CD4-positive, alpha-beta T cell (primary cell): ENCODE measurements at regions of chr21 and their contacts with region 1.

Region 1: DNA sequence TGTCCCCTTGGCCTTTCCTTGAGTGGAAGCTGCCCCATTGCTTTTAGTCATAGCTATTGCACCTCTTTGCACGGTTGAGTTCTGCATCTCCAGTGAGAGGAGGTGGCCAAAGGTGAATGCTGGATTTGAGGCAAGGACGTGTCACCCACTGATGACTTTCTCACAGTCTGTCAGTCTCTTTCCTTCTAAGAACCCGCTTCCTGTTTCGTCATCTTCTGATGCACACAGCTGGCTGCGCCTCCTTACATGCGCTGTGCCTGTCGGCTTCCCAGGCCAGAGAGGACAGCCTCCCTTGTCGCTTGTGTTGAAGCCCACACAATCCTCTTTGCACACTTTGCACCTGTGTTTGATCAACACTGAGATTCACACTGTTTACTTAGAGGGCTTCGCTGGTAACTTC is 41.8 kb upstream of the PWP2 start:
- DNase-seq: peak; percentile 58 to 94 (median 75)
- ATAC-seq: peak; percentile 91
- H3K4me3 ChIP-seq: peak overlapping the region; percentile 20
- H3K4me3 Mint-ChIP-seq: peak overlapping the region; percentile 67
- H3K27ac ChIP-seq: peak overlapping the region; percentile 55 to 91
- H3K27ac Mint-ChIP-seq: peak overlapping the region; percentile 92
- H3K4me1 ChIP-seq: peaks cover 18% of the 10 kb centered on the region
- H3K4me1 Mint-ChIP-seq: peaks cover 60% of the 10 kb centered on the region
- H3K27me3 ChIP-seq: no peaks in the 10 kb centered on the region
- H3K27me3 Mint-ChIP-seq: no peaks in the 10 kb centered on the region
- CTCF ChIP-seq: no peak

Region 2: GRCh38 chr21:42833439-42833815 is 1232.0 kb before region 1 on chr21:
- CTCF ChIA-PET with region 1: no interaction called
- POLR2A ChIA-PET with region 1: no interaction called
- intact Hi-C with region 1: no loop called
- DNase-seq: peak; percentile 38 to 75 (median 57)
- ATAC-seq: peak; percentile 85
- H3K4me3 ChIP-seq: peak overlapping the region; percentile 24
- H3K4me3 Mint-ChIP-seq: peak overlapping the region; percentile 81
- H3K27ac ChIP-seq: no peak overlapping the region
- H3K27ac Mint-ChIP-seq: peak overlapping the region; percentile 40
- H3K4me1 ChIP-seq: peaks cover 35% of the 10 kb centered on the region
- H3K4me1 Mint-ChIP-seq: peaks cover 44% of the 10 kb centered on the region
- H3K27me3 ChIP-seq: no peaks in the 10 kb centered on the region
- H3K27me3 Mint-ChIP-seq: no peaks in the 10 kb centered on the region
- CTCF ChIP-seq: peak; percentile 46

Region 3: DNA sequence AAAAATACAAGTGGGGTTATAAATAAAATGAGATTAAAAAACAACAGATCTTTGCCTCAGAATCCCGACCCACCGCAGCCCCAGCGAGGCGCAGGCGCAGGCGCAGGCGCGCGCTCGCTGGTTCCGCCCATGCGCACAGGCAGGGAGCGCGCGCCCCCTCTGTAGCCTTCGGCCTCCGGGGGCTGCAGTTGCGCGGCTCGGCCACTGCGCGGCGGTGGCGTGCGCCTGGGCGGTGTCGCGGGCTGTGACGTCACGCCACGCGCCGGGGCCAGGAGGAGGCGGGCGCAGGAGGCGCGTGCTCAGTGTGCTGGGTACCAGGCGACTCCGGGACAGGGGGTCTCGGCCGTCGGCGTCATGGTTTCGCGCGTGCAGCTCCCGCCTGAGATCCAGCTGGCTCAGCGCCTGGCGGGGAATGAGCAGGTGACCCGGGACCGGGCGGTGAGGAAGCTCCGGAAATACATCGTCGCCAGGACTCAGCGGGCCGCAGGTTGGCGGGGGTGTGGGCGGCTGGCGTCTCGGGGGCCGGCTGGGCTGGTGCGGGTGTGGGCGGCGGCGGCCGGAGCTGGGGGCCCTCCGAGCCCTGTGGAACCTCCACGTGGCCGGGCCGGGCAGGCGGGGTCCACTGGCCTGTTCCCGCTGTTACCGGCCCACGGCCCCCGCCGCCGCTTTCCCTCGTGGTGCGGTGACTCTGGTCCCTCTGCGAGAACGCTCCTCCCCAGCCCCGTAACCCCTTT is 276.0 kb before region 1 on chr21 and contains the start of gene RRP1:
- CTCF ChIA-PET with region 1: no interaction called
- POLR2A ChIA-PET with region 1: no interaction called
- intact Hi-C with region 1: loop called in 1 of 2 experiments (anchors 10 kb)
- DNase-seq: peak; percentile 85 to 98 (median 94)
- ATAC-seq: peak; percentile 93
- H3K4me3 ChIP-seq: peak within 1 kb of the TSS; percentile 76
- H3K4me3 Mint-ChIP-seq: peak within 1 kb of the TSS; percentile 95
- H3K27ac ChIP-seq: peak within 1 kb of the TSS; percentile 44 to 55
- H3K27ac Mint-ChIP-seq: peak within 1 kb of the TSS; percentile 84
- H3K4me1 ChIP-seq: peaks cover 27% of the 10 kb centered on the region
- H3K4me1 Mint-ChIP-seq: peaks cover 18% of the 10 kb centered on the region
- H3K27me3 ChIP-seq: no peaks in the 10 kb centered on the region
- H3K27me3 Mint-ChIP-seq: no peaks in the 10 kb centered on the region
- CTCF ChIP-seq: peak; percentile 92
- total RNA-seq, gene RRP1: 27.7 to 29.0 TPM

Region 4: DNA sequence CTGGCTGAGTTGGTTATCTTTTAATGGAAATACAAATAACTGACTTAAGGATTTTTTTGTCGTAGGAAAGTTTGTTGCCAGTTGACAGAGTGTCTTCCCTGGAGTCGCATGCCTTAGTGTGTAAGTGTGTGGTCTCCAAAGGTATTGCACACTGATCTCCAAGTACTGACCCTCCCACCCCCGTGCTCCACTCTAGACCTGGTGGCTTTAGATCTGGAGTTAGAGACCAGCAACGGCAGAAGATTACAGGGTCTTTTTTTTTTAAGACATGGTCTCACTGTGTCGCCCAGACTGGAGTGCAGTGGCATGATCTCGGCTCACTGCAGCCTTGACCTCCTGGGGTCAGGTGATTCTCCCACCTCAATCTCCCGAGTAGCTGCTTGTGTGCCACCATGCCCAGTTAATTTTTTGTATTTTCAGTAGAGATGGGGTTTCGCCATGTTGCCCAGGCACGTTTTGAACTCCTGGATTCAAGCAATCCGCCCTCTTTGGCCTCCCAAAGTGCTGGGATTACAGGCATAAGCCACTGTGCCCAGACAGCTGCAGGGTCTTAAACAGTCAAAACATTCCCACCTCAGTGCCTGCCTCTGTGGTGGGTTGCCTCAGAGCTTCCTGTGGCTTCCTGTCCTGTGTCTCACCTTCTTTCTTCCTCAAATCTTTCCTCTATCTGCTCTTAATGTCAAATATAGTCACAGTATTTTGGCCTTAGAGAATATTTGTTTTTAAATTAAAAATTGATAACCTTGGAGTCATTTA is 46.4 kb before region 1 on chr21:
- CTCF ChIA-PET with region 1: interaction called, 9 read pairs
- POLR2A ChIA-PET with region 1: interaction called, 7 read pairs
- intact Hi-C with region 1: loop called in 1 of 2 experiments (anchors 2 kb)
- DNase-seq: peak in 2 of 14 experiments; percentile 27 to 30
- ATAC-seq: no peak
- H3K4me3 ChIP-seq: no peak overlapping the region
- H3K4me3 Mint-ChIP-seq: peak overlapping the region; percentile 57
- H3K27ac ChIP-seq: peak overlapping the region in 1 of 2 donors; percentile 5
- H3K27ac Mint-ChIP-seq: peak overlapping the region; percentile 81
- H3K4me1 ChIP-seq: peaks cover 82% of the 10 kb centered on the region
- H3K4me1 Mint-ChIP-seq: peaks cover 87% of the 10 kb centered on the region
- H3K27me3 ChIP-seq: no peaks in the 10 kb centered on the region
- H3K27me3 Mint-ChIP-seq: no peaks in the 10 kb centered on the region
- CTCF ChIP-seq: no peak

Region 5: DNA sequence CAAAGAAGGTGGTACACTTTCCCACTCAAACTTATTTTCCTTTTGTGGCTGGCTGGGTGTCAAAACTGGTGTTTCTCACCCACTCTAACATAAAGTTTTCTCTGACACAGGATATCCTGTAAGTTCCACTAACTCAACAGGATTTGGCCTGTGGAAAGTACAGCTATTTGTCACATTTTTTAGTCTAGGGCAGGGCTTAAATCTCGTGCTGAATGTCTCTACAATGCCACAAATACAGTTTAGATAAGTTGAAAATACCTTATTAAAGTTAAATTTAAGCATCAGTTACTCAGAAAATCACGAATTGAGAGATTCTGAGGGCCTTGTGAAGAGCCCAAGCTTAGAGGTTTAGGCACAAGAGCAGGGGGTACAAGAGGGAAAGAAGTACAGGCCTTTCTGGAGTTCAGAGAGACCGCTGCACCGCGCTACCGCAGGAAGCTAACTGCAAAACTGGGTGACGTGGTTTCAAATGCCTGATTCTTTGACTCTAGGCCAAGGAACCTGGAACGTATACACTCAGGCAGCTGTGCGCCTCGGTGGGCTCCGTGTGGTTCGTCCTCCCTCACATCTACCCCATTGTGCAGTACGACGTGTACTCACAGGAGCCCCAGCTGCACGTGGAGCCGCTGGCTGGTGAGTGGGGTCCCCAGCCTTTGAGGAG is 18.3 kb after region 1 on chr21:
- CTCF ChIA-PET with region 1: interaction called, 4 read pairs
- POLR2A ChIA-PET with region 1: interaction called, 49 read pairs
- intact Hi-C with region 1: loop called (anchors 1 to 2 kb)
- DNase-seq: peak; percentile 44 to 90 (median 66)
- ATAC-seq: peak; percentile 81
- H3K4me3 ChIP-seq: peak overlapping the region; percentile 41
- H3K4me3 Mint-ChIP-seq: peak overlapping the region; percentile 69
- H3K27ac ChIP-seq: peak overlapping the region; percentile 80 to 91
- H3K27ac Mint-ChIP-seq: peak overlapping the region; percentile 95
- H3K4me1 ChIP-seq: peaks cover 96% of the 10 kb centered on the region
- H3K4me1 Mint-ChIP-seq: peaks cover 85% of the 10 kb centered on the region
- H3K27me3 ChIP-seq: no peaks in the 10 kb centered on the region
- H3K27me3 Mint-ChIP-seq: no peaks in the 10 kb centered on the region
- CTCF ChIP-seq: no peak